ENCODE measurements at regions of chr5 and their contacts with region 1.

Region 1: GRCh38 chr5:38193015-38193581 is 65.3 kb upstream of the EGFLAM start:
- DNase-seq: peak; percentile 75
- ATAC-seq: peak; percentile 81
- H3K4me3 Mint-ChIP-seq: no peak overlapping the region
- H3K27ac Mint-ChIP-seq: no peak overlapping the region
- H3K4me1 Mint-ChIP-seq: no peaks in the 10 kb centered on the region
- H3K27me3 Mint-ChIP-seq: peaks cover 22% of the 10 kb centered on the region
- CTCF ChIP-seq: peak; percentile 81

Region 2: GRCh38 chr5:37774912-37775483 is 418.1 kb before region 1 on chr5:
- CTCF ChIA-PET with region 1: interaction called, 25 read pairs
- POLR2A ChIA-PET with region 1: no interaction called
- intact Hi-C with region 1: no loop called
- DNase-seq: peak; percentile 57
- ATAC-seq: no peak
- H3K4me3 Mint-ChIP-seq: no peak overlapping the region
- H3K27ac Mint-ChIP-seq: no peak overlapping the region
- H3K4me1 Mint-ChIP-seq: no peaks in the 10 kb centered on the region
- H3K27me3 Mint-ChIP-seq: no peaks in the 10 kb centered on the region
- CTCF ChIP-seq: peak; percentile 73

Region 3: GRCh38 chr5:37837414-37838032 is 355.6 kb before region 1 on chr5:
- CTCF ChIA-PET with region 1: interaction called, 25 read pairs
- POLR2A ChIA-PET with region 1: no interaction called
- intact Hi-C with region 1: loop called (anchors 2 kb)
- DNase-seq: peak; percentile 85
- ATAC-seq: peak; percentile 75
- H3K4me3 Mint-ChIP-seq: peak overlapping the region; percentile 44
- H3K27ac Mint-ChIP-seq: no peak overlapping the region
- H3K4me1 Mint-ChIP-seq: peaks cover 23% of the 10 kb centered on the region
- H3K27me3 Mint-ChIP-seq: peaks cover 73% of the 10 kb centered on the region
- CTCF ChIP-seq: peak; percentile 85

Region 4: GRCh38 chr5:38208782-38209378 is 15.8 kb after region 1 on chr5:
- CTCF ChIA-PET with region 1: interaction called, 11 read pairs
- POLR2A ChIA-PET with region 1: no interaction called
- intact Hi-C with region 1: no loop called
- DNase-seq: peak; percentile 26
- ATAC-seq: no peak
- H3K4me3 Mint-ChIP-seq: no peak overlapping the region
- H3K27ac Mint-ChIP-seq: no peak overlapping the region
- H3K4me1 Mint-ChIP-seq: no peaks in the 10 kb centered on the region
- H3K27me3 Mint-ChIP-seq: peaks cover 14% of the 10 kb centered on the region
- CTCF ChIP-seq: no peak